ENCODE measurements at regions of chr19 and their contacts with region 1.

Region 1: DNA sequence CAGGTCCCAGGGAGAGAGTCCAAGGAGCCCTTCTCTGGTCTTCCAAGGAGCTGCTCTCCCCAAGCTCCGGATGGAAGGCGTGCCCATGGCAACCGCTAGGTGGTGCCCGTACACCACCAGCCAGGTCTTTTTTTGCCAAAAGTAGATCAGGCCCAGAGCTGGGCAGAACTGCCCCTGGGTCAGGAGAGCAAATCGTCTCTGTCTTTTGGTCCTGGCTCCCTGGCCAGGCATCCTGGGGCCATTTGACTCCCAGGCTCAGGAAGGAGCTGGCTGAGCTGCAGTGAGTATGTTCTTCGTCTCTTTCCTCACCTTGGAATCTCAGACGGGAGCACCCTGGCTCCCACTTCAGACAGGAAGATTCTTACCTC is 24.6 kb upstream of the BCL3 start:
- DNase-seq: peak; percentile 30 to 89 (median 70)
- ATAC-seq: peak; percentile 86 to 90 (median 88)
- H3K4me3 ChIP-seq: no peak overlapping the region
- H3K4me3 Mint-ChIP-seq: no peak overlapping the region
- H3K27ac ChIP-seq: no peak overlapping the region
- H3K27ac Mint-ChIP-seq: no peak overlapping the region
- H3K4me1 ChIP-seq: peaks cover 2 to 45% of the 10 kb centered on the region in 2 experiments
- H3K4me1 Mint-ChIP-seq: peaks cover 32 to 39% (median 33%) of the 10 kb centered on the region in 3 donors
- H3K27me3 ChIP-seq: peaks cover 0 to 36% of the 10 kb centered on the region in 2 experiments
- H3K27me3 Mint-ChIP-seq: no peaks in the 10 kb centered on the region

Region 2: DNA sequence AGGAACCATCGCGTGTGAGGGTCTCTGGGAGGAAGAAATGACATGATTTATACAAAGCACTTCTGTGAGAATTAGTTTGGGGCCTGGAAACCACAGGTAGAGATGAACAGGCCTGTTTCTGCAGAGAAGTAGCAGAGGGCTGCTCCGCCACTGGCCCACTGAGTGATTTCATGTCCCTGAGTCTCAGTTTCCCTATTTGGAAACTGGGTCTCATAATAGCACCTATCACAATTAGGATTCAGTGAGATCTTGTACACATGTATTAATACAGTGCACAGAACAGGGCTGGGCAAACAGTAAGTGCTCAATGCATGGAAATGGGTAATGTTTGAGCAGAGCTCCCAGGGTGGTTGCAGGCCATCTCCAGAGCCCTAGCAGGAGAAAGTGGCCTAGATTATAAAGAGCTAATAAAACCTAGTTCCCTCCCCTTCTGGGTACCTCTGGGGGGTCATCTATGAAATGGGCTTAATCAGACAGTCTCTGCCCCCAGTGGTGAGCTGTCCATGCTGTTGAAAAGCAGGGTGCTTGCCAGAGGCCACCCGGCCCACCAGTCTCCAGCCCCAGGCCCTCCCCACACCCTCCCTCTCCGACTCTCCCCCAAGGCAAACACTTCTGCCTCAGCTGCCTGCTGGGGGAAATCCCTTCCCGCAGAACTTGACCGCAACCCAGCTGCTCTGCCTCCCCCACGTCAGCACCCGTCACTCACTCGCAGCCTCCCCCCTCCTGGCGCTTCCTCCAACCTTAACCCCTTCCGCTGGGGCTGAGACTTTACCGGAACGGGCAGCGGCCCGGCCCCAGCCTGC is 29.1 kb after region 1 on chr19:
- CTCF ChIA-PET with region 1: interaction called, 3 to 15 read pairs
- POLR2A ChIA-PET with region 1: no interaction called
- DNase-seq: peak; percentile 72 to 98 (median 95)
- ATAC-seq: peak; percentile 82 to 84 (median 83)
- H3K4me3 ChIP-seq: peak overlapping the region; percentile 11 to 52
- H3K4me3 Mint-ChIP-seq: peak overlapping the region; percentile 84 to 89 (median 85)
- H3K27ac ChIP-seq: peak overlapping the region; percentile 87
- H3K27ac Mint-ChIP-seq: peak overlapping the region; percentile 93 to 94
- H3K4me1 ChIP-seq: peaks cover 24 to 81% of the 10 kb centered on the region in 2 experiments
- H3K4me1 Mint-ChIP-seq: peaks cover 71 to 74% (median 72%) of the 10 kb centered on the region in 3 donors
- H3K27me3 ChIP-seq: no peaks in the 10 kb centered on the region
- H3K27me3 Mint-ChIP-seq: no peaks in the 10 kb centered on the region